Esophagus squamous epithelium (tissue), 5 donors: ENCODE measurements at regions of chr5 and their contacts with region 1.

Region 1: GRCh38 chr5:51138164-51138563 is 245.1 kb upstream of the ISL1 start:
- DNase-seq: no peak
- H3K4me3 ChIP-seq: no peak overlapping the region
- H3K27ac ChIP-seq: no peak overlapping the region
- H3K4me1 ChIP-seq: no peaks in the 10 kb centered on the region
- H3K27me3 ChIP-seq: no peaks in the 10 kb centered on the region
- CTCF ChIP-seq: no peak
- POLR2A ChIP-seq: no peak

Region 2: GRCh38 chr5:51058293-51058692 is 79.9 kb before region 1 on chr5:
- intact Hi-C with region 1: loop called (anchors 5 kb)
- DNase-seq: no peak
- H3K4me3 ChIP-seq: no peak overlapping the region
- H3K27ac ChIP-seq: no peak overlapping the region
- H3K4me1 ChIP-seq: no peaks in the 10 kb centered on the region
- H3K27me3 ChIP-seq: no peaks in the 10 kb centered on the region
- CTCF ChIP-seq: no peak
- POLR2A ChIP-seq: no peak